ENCODE measurements at regions of chr7 and their contacts with region 1.

Region 1: DNA sequence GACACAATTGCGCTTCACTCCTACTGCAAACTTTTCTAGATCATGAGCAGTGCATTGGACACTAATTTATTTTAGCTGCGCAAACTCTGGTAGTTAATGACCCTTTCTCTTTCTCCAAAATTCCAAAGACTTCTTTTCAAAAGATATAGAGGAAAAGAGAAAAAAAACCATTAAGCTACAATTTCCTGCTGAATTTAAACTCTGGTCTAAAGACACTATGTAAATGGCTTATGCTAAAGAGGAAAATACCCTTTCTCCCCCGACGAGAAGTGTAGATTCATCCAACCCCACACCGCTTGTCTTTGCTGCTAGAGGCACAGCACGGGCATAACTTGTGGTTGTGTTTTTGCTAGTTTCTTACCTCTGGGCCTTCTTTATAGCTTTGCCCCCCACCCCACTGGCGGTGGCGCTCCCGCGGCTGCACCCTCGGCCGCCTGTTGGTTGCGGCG is 84.1 kb downstream of the SNX10 start:
- DNase-seq: peak in 4 of 35 experiments; percentile 1 to 37 (median 4)
- ATAC-seq: peak in 3 of 4 experiments; percentile 10 to 22 (median 13)
- H3K4me3 ChIP-seq: peak overlapping the region in 1 of 2 donors; percentile 74
- H3K4me3 Mint-ChIP-seq: peak overlapping the region; percentile 58 to 78 (median 67)
- H3K27ac ChIP-seq: no peak overlapping the region
- H3K27ac Mint-ChIP-seq: no peak overlapping the region
- H3K4me1 ChIP-seq: peaks cover 0 to 14% of the 10 kb centered on the region in 2 experiments
- H3K4me1 Mint-ChIP-seq: peaks cover 2 to 6% (median 6%) of the 10 kb centered on the region in 3 donors
- H3K27me3 ChIP-seq: peaks cover 0 to 16% of the 10 kb centered on the region in 2 experiments
- H3K27me3 Mint-ChIP-seq: peaks cover 25 to 39% of the 10 kb centered on the region in 2 donors

Region 2: GRCh38 chr7:26307226-26307625 is 68.5 kb before region 1 on chr7:
- CTCF ChIA-PET with region 1: no interaction called
- POLR2A ChIA-PET with region 1: no interaction called
- DNase-seq: no peak
- ATAC-seq: no peak
- H3K4me3 ChIP-seq: no peak overlapping the region
- H3K4me3 Mint-ChIP-seq: no peak overlapping the region
- H3K27ac ChIP-seq: no peak overlapping the region
- H3K27ac Mint-ChIP-seq: peak overlapping the region in 1 of 2 donors; percentile 34
- H3K4me1 ChIP-seq: peaks cover 4 to 11% of the 10 kb centered on the region in 2 experiments
- H3K4me1 Mint-ChIP-seq: peaks cover 14 to 24% (median 14%) of the 10 kb centered on the region in 3 donors
- H3K27me3 ChIP-seq: no peaks in the 10 kb centered on the region
- H3K27me3 Mint-ChIP-seq: no peaks in the 10 kb centered on the region

Region 3: GRCh38 chr7:27160546-27161213 is 784.9 kb after region 1 on chr7:
- CTCF ChIA-PET with region 1: interaction called, 8 to 11 read pairs
- POLR2A ChIA-PET with region 1: no interaction called
- DNase-seq: peak; percentile 50 to 92 (median 79)
- ATAC-seq: peak; percentile 70 to 85 (median 74)
- H3K4me3 ChIP-seq: peak overlapping the region; percentile 57 to 81
- H3K4me3 Mint-ChIP-seq: peak overlapping the region; percentile 43 to 73 (median 63)
- H3K27ac ChIP-seq: no peak overlapping the region
- H3K27ac Mint-ChIP-seq: no peak overlapping the region
- H3K4me1 ChIP-seq: peaks cover 2 to 61% of the 10 kb centered on the region in 2 experiments
- H3K4me1 Mint-ChIP-seq: peaks cover 35 to 41% (median 40%) of the 10 kb centered on the region in 3 donors
- H3K27me3 ChIP-seq: peaks cover 2 to 90% of the 10 kb centered on the region in 2 experiments
- H3K27me3 Mint-ChIP-seq: peaks cover 49 to 82% of the 10 kb centered on the region in 2 donors

Measured in T-cell (primary cell).